ENCODE measurements at regions of chr6 and their contacts with region 1.

Region 1: DNA sequence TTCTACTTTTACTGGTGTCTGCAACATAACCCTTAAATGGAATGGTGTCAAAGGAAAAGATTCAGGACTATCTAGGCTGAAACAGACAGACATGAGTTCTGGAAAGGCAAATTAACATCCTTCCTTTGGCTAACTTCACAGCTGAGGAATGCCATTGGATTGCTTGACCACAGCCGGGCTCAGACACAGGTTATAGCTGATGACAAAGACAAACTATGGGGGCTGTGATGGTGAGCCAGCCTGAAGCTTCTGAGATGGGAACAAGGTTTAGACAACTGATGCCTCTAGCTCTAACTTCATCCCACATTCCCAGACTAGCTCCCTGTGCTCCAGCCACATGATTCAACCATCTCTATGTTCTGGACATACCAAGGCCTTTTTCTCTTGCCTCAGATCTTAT is 15.3 kb downstream of the POLR1C start:
- DNase-seq: no peak
- H3K4me3 ChIP-seq: no peak overlapping the region
- H3K27ac ChIP-seq: no peak overlapping the region
- H3K4me1 ChIP-seq: no peaks in the 10 kb centered on the region
- H3K27me3 ChIP-seq: no peaks in the 10 kb centered on the region
- CTCF ChIP-seq: no peak

Region 2: DNA sequence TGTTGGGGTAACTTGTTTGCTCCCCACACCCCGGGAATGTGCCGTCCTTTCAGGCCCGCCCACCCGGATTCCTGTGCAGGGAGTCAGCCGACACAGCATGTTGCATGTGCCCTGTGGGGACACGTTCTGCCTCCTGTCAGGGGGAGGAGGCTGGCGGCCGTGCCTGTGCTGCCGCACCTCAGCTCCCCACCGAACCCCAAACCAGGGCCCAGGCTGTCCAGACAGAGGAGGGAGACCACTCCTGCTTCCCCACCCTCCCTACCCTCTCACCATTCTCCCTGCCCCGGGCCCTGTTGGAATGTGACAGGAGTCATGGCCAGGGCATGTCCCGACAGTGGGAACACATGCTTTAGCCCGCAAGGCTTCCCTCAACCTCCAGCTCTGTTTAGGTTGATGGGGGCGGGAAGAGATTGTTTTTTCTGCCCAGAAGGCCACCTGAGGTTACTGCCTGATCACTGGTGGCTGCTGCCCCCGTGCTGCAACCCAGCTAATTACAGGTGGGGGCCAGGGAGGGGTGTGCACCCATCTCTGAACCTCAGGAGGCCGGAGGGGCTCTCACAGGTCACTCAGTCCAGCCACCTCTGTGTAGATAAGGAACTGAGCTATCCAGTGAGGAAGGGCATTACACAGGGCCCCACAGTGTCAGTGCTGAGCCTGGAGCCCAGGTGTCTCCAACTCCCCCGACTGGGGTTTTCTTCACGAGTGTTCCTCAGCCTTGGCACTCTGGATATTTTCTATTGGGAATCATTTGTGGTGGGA is 35.7 kb before region 1 on chr6:
- CTCF ChIA-PET with region 1: no interaction called
- POLR2A ChIA-PET with region 1: interaction called, 17 read pairs
- intact Hi-C with region 1: no loop called
- DNase-seq: no peak
- H3K4me3 ChIP-seq: no peak overlapping the region
- H3K27ac ChIP-seq: no peak overlapping the region
- H3K4me1 ChIP-seq: peaks cover 33% of the 10 kb centered on the region
- H3K27me3 ChIP-seq: no peaks in the 10 kb centered on the region
- CTCF ChIP-seq: peak; percentile 42

Region 3: DNA sequence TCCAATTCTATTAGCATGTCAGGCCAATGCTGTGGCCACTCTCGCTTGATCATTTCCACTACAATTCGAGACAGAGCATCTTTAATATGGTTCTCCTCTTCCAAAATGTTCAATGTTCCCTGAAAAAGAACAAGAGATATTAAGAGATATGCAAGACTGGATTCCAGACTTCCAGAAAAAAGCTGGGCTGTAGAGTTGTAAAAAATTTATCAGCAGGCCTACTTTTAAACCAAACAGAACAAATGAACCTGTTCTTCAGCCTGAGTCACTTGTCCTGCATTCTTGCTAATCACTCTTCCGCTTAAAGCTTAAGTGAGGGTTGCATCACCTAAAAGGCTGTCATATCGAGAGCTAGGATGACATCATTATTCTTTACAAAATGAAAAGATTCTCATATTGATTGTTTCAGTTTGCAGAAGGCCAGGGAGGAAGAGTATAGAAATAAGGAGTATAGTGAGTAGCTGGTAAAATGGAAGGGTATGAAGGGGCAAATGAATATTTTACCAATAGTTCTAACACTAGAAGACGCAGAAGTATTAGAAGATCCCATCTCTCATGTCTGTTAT is 38.8 kb after region 1 on chr6:
- CTCF ChIA-PET with region 1: no interaction called
- POLR2A ChIA-PET with region 1: no interaction called
- intact Hi-C with region 1: loop called (anchors 5 kb)
- DNase-seq: peak; percentile 37
- H3K4me3 ChIP-seq: no peak overlapping the region
- H3K27ac ChIP-seq: peak overlapping the region; percentile 45
- H3K4me1 ChIP-seq: no peaks in the 10 kb centered on the region
- H3K27me3 ChIP-seq: no peaks in the 10 kb centered on the region
- CTCF ChIP-seq: no peak

Region 4: DNA sequence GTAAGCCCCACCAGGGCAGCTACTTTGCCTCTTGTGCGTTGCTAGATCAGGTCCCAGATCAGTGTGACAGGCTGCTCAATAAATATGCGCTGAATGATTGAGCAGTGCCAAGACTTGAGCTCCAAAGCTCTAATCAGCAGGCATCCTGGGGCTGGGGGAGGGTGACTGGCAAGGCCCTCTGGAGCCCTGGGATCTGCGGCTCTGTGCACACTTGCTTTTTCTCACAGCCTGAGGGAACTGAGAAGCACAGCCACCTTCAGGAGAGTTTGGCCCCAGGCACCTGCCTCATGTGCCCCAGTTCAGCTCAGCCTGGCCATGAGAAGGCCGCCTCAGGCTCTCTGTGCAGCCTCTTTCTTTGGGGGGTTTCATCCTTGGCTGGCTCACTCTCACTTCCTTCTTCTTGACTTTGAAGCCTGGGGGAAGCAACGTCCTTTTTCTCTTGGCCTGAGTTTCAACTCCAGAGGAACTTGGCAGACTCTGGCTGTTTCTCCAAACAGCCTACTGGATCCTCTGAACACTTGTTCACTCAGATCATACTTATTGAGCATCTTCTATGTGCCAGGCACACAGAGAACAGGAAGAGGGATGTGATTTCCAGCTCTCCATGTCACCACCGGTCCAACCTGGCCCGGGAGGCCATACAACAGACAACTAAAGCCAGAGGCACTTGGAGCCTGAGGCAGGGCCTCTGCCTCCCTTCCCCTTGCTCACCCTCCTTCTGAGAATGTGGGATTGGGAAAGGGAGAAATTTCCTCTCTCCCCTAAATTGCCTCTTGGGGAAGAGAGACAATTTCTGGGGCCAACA is 351.8 kb after region 1 on chr6:
- CTCF ChIA-PET with region 1: no interaction called
- POLR2A ChIA-PET with region 1: no interaction called
- intact Hi-C with region 1: no loop called
- DNase-seq: no peak
- H3K4me3 ChIP-seq: no peak overlapping the region
- H3K27ac ChIP-seq: no peak overlapping the region
- H3K4me1 ChIP-seq: peaks cover 9% of the 10 kb centered on the region
- H3K27me3 ChIP-seq: no peaks in the 10 kb centered on the region
- CTCF ChIP-seq: no peak